Activated CD4-positive, alpha-beta T cell treated with anti-CD3 and anti-CD28 coated beads, Interleukin-2, amount 10 ng/mL, durations not matched to agents 24 days and 14 days (primary cell): ENCODE measurements at regions of chr3 and their contacts with region 1.

Region 1: DNA sequence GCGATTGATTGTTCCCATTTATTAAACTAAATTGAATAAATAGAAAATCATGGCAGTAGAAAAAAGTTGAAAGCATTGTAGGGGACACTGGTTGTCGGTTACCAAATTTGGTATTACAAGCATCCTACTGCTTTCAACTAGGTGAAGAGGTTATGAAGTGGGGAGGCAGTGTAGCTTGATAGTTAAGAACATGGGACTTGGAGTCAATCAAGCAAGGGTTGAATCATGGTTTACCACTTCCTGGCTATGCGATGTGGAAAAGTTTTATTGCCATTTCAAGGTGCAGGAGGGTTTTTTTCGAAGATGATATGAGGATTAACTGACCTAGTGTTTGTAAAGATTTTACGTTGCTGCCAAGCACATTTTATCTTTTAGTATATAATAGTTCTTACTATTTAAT is 318.2 kb upstream of the KCNH8 start:
- DNase-seq: peak; percentile 70
- H3K4me3 Mint-ChIP-seq: no peak overlapping the region
- H3K27ac Mint-ChIP-seq: no peak overlapping the region
- H3K4me1 Mint-ChIP-seq: peaks cover 11% of the 10 kb centered on the region
- H3K27me3 Mint-ChIP-seq: no peaks in the 10 kb centered on the region

Region 2: GRCh38 chr3:18787441-18787840 is 42.6 kb before region 1 on chr3:
- intact Hi-C with region 1: loop called (anchors 2 kb)
- DNase-seq: no peak
- H3K4me3 Mint-ChIP-seq: no peak overlapping the region
- H3K27ac Mint-ChIP-seq: no peak overlapping the region
- H3K4me1 Mint-ChIP-seq: peaks cover 6% of the 10 kb centered on the region
- H3K27me3 Mint-ChIP-seq: peaks cover 2% of the 10 kb centered on the region

Region 3: GRCh38 chr3:18847583-18848197 is 17.6 kb after region 1 on chr3:
- intact Hi-C with region 1: no loop called
- DNase-seq: no peak
- H3K4me3 Mint-ChIP-seq: no peak overlapping the region
- H3K27ac Mint-ChIP-seq: no peak overlapping the region
- H3K4me1 Mint-ChIP-seq: peaks cover 19% of the 10 kb centered on the region
- H3K27me3 Mint-ChIP-seq: no peaks in the 10 kb centered on the region

Region 4: DNA sequence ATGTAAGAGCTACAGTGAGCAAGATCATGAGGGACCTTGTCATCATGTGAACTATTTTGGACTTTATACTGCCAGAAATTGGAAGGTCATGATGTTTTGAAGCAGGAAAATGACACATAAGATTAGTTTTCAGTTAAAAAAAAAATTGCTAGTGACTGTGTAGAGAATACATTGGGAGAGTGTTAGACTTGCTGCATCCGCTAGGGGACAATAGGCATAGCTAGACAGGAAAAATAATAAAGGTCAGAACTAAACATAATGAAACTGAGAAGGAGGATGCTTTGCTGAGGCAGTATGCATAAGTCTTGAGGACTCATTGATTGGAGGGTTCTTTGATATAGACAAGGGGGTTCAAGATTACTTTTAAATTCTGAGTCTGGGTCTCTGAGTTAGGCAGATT is 42.4 kb after region 1 on chr3:
- intact Hi-C with region 1: loop called (anchors 5 kb)
- DNase-seq: no peak
- H3K4me3 Mint-ChIP-seq: no peak overlapping the region
- H3K27ac Mint-ChIP-seq: no peak overlapping the region
- H3K4me1 Mint-ChIP-seq: peaks cover 32% of the 10 kb centered on the region
- H3K27me3 Mint-ChIP-seq: no peaks in the 10 kb centered on the region